ENCODE measurements at regions of chr1 and their contacts with region 1.

Region 1: GRCh38 chr1:113904674-113905434 is at the starts of genes AP4B1 and DCLRE1B:
- DNase-seq: peak; percentile 97
- ATAC-seq: peak; percentile 89
- H3K4me3 Mint-ChIP-seq: peak within 1 kb of the TSS; percentile 99
- H3K27ac Mint-ChIP-seq: peak within 1 kb of the TSS; percentile 91
- H3K4me1 Mint-ChIP-seq: peaks cover 48% of the 10 kb centered on the region
- H3K27me3 Mint-ChIP-seq: no peaks in the 10 kb centered on the region
- total RNA-seq, gene AP4B1: 53.9 to 60.5 TPM
- total RNA-seq, gene DCLRE1B: 13.4 to 14.3 TPM

Region 2: GRCh38 chr1:113871597-113872113 is 33.2 kb before region 1 on chr1 and contains the start of gene PTPN22:
- POLR2A ChIA-PET with region 1: interaction called, 49 read pairs
- DNase-seq: peak; percentile 71
- ATAC-seq: peak; percentile 80
- H3K4me3 Mint-ChIP-seq: peak within 1 kb of the TSS; percentile 88
- H3K27ac Mint-ChIP-seq: peak within 1 kb of the TSS; percentile 96
- H3K4me1 Mint-ChIP-seq: peaks cover 53% of the 10 kb centered on the region
- H3K27me3 Mint-ChIP-seq: no peaks in the 10 kb centered on the region
- total RNA-seq, gene PTPN22: 74.1 to 82.9 TPM

Region 3: GRCh38 chr1:113881661-113882060 is 23.2 kb before region 1 on chr1:
- POLR2A ChIA-PET with region 1: interaction called, 18 read pairs
- DNase-seq: no peak
- ATAC-seq: no peak
- H3K4me3 Mint-ChIP-seq: no peak overlapping the region
- H3K27ac Mint-ChIP-seq: no peak overlapping the region
- H3K4me1 Mint-ChIP-seq: peaks cover 33% of the 10 kb centered on the region
- H3K27me3 Mint-ChIP-seq: no peaks in the 10 kb centered on the region

Region 4: DNA sequence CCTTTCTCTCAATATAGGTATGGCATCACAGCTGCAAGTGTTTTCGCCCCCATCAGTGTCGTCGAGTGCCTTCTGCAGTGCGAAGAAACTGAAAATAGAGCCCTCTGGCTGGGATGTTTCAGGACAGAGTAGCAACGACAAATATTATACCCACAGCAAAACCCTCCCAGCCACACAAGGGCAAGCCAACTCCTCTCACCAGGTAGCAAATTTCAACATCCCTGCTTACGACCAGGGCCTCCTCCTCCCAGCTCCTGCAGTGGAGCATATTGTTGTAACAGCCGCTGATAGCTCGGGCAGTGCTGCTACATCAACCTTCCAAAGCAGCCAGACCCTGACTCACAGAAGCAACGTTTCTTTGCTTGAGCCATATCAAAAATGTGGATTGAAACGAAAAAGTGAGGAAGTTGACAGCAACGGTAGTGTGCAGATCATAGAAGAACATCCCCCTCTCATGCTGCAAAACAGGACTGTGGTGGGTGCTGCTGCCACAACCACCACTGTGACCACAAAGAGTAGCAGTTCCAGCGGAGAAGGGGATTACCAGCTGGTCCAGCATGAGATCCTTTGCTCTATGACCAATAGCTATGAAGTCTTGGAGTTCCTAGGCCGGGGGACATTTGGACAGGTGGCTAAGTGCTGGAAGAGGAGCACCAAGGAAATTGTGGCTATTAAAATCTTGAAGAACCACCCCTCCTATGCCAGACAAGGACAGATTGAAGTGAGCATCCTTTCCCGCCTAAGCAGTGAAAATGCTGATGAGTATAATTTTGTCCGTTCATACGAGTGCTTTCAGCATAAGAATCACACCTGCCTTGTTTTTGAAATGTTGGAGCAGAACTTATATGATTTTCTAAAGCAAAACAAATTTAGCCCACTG is 35.8 kb after region 1 on chr1:
- POLR2A ChIA-PET with region 1: interaction called, 11 read pairs
- DNase-seq: peak; percentile 70
- ATAC-seq: peak; percentile 61
- H3K4me3 Mint-ChIP-seq: peak overlapping the region; percentile 84
- H3K27ac Mint-ChIP-seq: peak overlapping the region; percentile 86
- H3K4me1 Mint-ChIP-seq: peaks cover 64% of the 10 kb centered on the region
- H3K27me3 Mint-ChIP-seq: no peaks in the 10 kb centered on the region

Measured in activated naive CD8-positive, alpha-beta T cell treated with anti-CD3 and anti-CD28 coated beads, Interleukin-2, amount 10 ng/mL, durations not matched to agents 7 days and 5 days (primary cell).